CD8-positive, alpha-beta T cell (primary cell): ENCODE measurements at regions of chr15 and their contacts with region 1.

Region 1: DNA sequence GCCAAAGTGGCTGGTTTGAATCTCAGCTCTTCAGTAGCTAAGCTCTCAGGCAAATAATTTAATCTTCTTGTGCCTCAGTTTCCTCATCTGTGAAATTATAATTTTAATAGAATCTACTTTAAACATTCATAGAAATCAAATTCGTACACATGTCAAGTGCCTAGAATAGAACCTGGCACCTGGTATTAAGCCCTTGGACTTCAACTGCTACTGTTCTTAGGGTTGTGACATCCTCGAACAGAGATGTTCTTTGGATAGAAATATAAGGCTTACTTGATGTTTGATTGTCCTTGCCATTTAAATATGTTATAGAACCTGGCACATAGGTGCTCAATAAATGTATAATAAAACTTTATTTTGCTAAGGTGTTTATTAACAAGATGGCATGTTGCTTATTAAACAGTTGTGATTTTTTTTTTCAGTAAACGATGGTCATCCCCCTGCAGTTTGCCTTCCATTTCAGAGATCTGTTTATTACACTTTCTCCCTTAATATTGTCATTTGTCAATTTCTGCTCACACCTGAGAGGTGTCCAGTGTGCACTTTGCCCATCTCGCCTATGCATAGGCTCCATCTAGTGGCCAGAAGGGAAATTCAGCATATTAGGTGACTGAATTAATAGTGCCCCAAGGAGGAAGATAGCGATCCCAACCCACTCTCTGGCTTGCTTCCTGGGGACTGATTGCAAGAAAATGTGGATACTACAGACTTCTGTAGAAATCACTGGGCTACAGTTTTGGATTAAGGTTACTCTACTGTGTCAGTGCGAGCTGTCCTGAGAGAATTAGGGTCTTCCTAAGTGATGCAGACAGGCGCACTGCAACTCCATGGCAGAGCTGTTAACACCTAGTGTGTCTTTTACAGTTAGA is 10.7 kb downstream of the IGF1R start:
- DNase-seq: peak in 6 of 9 experiments; percentile 7 to 70 (median 36)
- ATAC-seq: peak; percentile 66
- H3K4me3 ChIP-seq: no peak overlapping the region
- H3K4me3 Mint-ChIP-seq: no peak overlapping the region
- H3K27ac ChIP-seq: no peak overlapping the region
- H3K27ac Mint-ChIP-seq: no peak overlapping the region
- H3K4me1 ChIP-seq: peaks cover 21% of the 10 kb centered on the region
- H3K4me1 Mint-ChIP-seq: peaks cover 52% of the 10 kb centered on the region
- H3K27me3 ChIP-seq: no peaks in the 10 kb centered on the region
- H3K27me3 Mint-ChIP-seq: peaks cover 1% of the 10 kb centered on the region
- CTCF ChIP-seq: peak; percentile 96

Region 2: GRCh38 chr15:98442379-98442833 is 216.7 kb before region 1 on chr15:
- CTCF ChIA-PET with region 1: interaction called, 3 read pairs
- POLR2A ChIA-PET with region 1: no interaction called
- intact Hi-C with region 1: loop called in 1 of 2 experiments (anchors 1 kb)
- DNase-seq: peak in 7 of 9 experiments; percentile 31 to 64 (median 54)
- ATAC-seq: peak; percentile 79
- H3K4me3 ChIP-seq: no peak overlapping the region
- H3K4me3 Mint-ChIP-seq: no peak overlapping the region
- H3K27ac ChIP-seq: no peak overlapping the region
- H3K27ac Mint-ChIP-seq: no peak overlapping the region
- H3K4me1 ChIP-seq: no peaks in the 10 kb centered on the region
- H3K4me1 Mint-ChIP-seq: no peaks in the 10 kb centered on the region
- H3K27me3 ChIP-seq: no peaks in the 10 kb centered on the region
- H3K27me3 Mint-ChIP-seq: peaks cover 6% of the 10 kb centered on the region
- CTCF ChIP-seq: peak; percentile 60

Region 3: GRCh38 chr15:98568382-98569017 is 90.6 kb before region 1 on chr15:
- CTCF ChIA-PET with region 1: interaction called, 5 read pairs
- POLR2A ChIA-PET with region 1: no interaction called
- intact Hi-C with region 1: loop called in 1 of 2 experiments (anchors 5 kb)
- DNase-seq: no peak
- ATAC-seq: no peak
- H3K4me3 ChIP-seq: no peak overlapping the region
- H3K4me3 Mint-ChIP-seq: no peak overlapping the region
- H3K27ac ChIP-seq: no peak overlapping the region
- H3K27ac Mint-ChIP-seq: no peak overlapping the region
- H3K4me1 ChIP-seq: no peaks in the 10 kb centered on the region
- H3K4me1 Mint-ChIP-seq: no peaks in the 10 kb centered on the region
- H3K27me3 ChIP-seq: no peaks in the 10 kb centered on the region
- H3K27me3 Mint-ChIP-seq: peaks cover 18% of the 10 kb centered on the region
- CTCF ChIP-seq: no peak

Region 4: DNA sequence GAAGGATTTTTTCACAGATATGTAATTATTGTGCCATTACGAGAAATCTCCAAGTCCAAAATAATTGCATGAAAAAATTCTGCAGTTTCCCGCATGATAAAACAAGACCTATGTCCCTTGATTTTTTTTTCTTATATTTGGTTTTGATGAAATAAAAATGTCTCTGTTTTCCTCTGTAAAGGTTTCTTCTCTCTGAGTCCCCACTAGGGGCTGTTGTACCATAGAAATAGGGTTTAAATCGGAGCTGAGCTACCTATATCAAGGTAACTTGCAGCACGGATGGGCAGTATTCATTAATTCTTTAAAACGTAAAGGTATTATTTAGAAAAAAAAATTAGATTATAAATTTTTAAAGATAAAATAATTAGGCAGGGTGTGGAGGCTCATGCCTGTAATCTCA is 77.3 kb before region 1 on chr15:
- CTCF ChIA-PET with region 1: interaction called, 8 read pairs
- POLR2A ChIA-PET with region 1: no interaction called
- intact Hi-C with region 1: loop called (anchors 2 to 5 kb)
- DNase-seq: peak in 2 of 9 experiments; percentile 8 to 44
- ATAC-seq: peak; percentile 56
- H3K4me3 ChIP-seq: no peak overlapping the region
- H3K4me3 Mint-ChIP-seq: no peak overlapping the region
- H3K27ac ChIP-seq: no peak overlapping the region
- H3K27ac Mint-ChIP-seq: no peak overlapping the region
- H3K4me1 ChIP-seq: peaks cover 10% of the 10 kb centered on the region
- H3K4me1 Mint-ChIP-seq: peaks cover 5% of the 10 kb centered on the region
- H3K27me3 ChIP-seq: peaks cover 7 to 13% of the 10 kb centered on the region in 2 experiments
- H3K27me3 Mint-ChIP-seq: peaks cover 32% of the 10 kb centered on the region
- CTCF ChIP-seq: peak; percentile 43

Region 5: GRCh38 chr15:98713585-98714001 is 54.5 kb after region 1 on chr15:
- CTCF ChIA-PET with region 1: no interaction called
- POLR2A ChIA-PET with region 1: no interaction called
- intact Hi-C with region 1: no loop called
- DNase-seq: peak in 2 of 9 experiments; percentile 25 to 65
- ATAC-seq: peak; percentile 44
- H3K4me3 ChIP-seq: no peak overlapping the region
- H3K4me3 Mint-ChIP-seq: peak overlapping the region; percentile 1
- H3K27ac ChIP-seq: no peak overlapping the region
- H3K27ac Mint-ChIP-seq: peak overlapping the region; percentile 47
- H3K4me1 ChIP-seq: peaks cover 56% of the 10 kb centered on the region
- H3K4me1 Mint-ChIP-seq: peaks cover 60% of the 10 kb centered on the region
- H3K27me3 ChIP-seq: no peaks in the 10 kb centered on the region
- H3K27me3 Mint-ChIP-seq: no peaks in the 10 kb centered on the region
- CTCF ChIP-seq: no peak